ENCODE measurements at regions of chr20 and their contacts with region 1.

Region 1: GRCh38 chr20:8131598-8132483 is at the start of gene PLCB1:
- DNase-seq: peak; percentile 93
- H3K4me3 ChIP-seq: peak within 1 kb of the TSS; percentile 79
- H3K27ac ChIP-seq: no peak within 1 kb of the TSS
- H3K4me1 ChIP-seq: no peaks in the 10 kb centered on the region
- H3K27me3 ChIP-seq: peaks cover 4% of the 10 kb centered on the region; the same call in 1 of the 2 replicates
- total RNA-seq, gene PLCB1: 12.8 and 14.4 TPM in 2 replicates

Region 2: DNA sequence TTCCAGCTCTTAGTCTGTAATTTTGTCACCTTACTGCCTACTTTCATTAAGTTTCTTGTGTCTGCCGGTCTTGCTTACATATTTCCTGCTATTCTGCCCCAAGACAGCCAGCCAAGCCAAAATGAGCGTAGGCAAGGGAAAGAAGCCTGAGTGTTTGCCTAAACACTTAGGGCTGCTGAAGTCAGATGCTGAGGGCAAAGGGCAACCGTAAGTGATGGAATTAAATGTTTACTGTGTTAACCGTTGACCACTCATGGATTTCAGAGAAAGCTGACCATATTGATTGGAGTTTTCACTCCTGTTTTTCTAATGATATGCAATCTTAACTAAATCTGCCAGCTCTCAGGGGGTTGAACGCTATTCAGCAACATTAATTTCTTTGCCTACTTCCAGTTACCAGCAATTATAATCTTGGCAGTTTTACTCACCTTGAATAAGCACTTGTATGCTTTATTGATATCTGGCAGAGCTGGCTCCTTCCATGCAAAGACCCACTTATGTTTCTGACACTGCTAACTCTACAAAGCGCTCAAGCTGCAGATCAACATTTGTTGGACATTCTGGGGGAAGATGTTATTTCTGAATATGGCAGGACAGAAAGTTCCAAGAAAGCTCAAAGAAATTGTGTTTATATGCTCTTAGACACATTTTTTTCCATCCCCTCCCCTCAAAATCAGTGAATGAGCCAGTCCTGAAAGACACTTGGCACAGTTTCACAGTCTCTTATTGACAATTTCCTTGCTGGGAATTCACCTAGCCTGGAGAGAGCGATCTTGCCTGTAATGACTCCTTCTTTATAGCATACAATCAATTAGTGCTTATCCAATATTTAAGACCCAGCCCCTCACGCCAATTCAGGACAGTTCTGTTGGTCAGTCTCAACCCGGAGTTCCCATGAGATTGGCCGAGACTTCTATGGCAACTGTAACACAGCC is 184.1 kb after region 1 on chr20:
- in situ Hi-C with region 1: no loop called
- DNase-seq: no peak
- H3K4me3 ChIP-seq: no peak overlapping the region
- H3K27ac ChIP-seq: no peak overlapping the region
- H3K4me1 ChIP-seq: no peaks in the 10 kb centered on the region
- H3K27me3 ChIP-seq: no peaks in the 10 kb centered on the region

Region 3: GRCh38 chr20:8389381-8390036 is 257.7 kb after region 1 on chr20:
- in situ Hi-C with region 1: loop called (anchors 10 kb)
- DNase-seq: peak; percentile 67
- H3K4me3 ChIP-seq: no peak overlapping the region
- H3K27ac ChIP-seq: no peak overlapping the region
- H3K4me1 ChIP-seq: peaks cover 31% of the 10 kb centered on the region
- H3K27me3 ChIP-seq: no peaks in the 10 kb centered on the region

Region 4: GRCh38 chr20:8633366-8633765 is 501.5 kb after region 1 on chr20:
- in situ Hi-C with region 1: no loop called
- DNase-seq: peak; percentile 71
- H3K4me3 ChIP-seq: no peak overlapping the region
- H3K27ac ChIP-seq: no peak overlapping the region
- H3K4me1 ChIP-seq: peaks cover 14% of the 10 kb centered on the region
- H3K27me3 ChIP-seq: no peaks in the 10 kb centered on the region

Region 5: GRCh38 chr20:8726460-8726859 is 594.6 kb after region 1 on chr20:
- in situ Hi-C with region 1: no loop called
- DNase-seq: no peak
- H3K4me3 ChIP-seq: no peak overlapping the region
- H3K27ac ChIP-seq: no peak overlapping the region
- H3K4me1 ChIP-seq: no peaks in the 10 kb centered on the region
- H3K27me3 ChIP-seq: no peaks in the 10 kb centered on the region